ENCODE measurements at regions of chr17 and their contacts with region 1.

Region 1: DNA sequence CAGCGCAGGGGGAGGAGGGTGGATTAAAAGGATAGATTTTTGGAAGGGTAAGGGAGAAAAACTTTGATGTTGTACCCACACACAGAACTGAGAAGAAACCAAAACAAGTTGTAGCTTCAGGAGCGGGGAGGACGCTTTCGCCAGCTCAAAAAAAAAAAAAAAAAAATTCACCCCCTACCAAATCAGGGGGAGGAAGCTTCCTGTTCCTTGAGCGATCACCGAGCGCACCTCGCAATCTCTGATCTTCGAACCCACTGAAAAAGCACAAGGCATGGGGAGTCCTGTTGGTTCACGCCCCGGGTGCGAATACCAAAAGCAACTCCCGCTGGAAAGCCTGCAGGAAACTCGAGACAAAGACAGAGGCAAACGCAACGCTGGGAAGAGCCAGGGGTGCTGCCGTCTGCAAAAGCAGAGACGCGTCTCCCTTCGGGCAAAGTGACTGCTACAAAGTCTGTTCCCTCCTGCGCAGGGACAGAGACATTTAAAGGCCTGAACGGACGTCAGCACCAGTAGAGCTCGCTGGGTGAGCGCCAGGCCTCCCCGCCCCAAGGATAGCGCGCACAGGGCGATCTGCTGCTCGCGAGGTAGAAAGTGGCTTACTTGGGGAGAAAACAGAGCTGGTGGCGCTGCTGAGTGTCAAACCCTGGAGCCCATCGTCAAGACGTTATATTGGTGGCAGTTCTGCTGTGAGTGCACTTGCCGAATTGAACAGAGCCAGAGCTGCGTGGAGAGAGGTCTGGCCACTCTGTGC is 190.4 kb downstream of the USP22 start:
- DNase-seq: peak; percentile 46
- ATAC-seq: peak; percentile 55
- H3K4me3 Mint-ChIP-seq: peak overlapping the region; percentile 60
- H3K27ac Mint-ChIP-seq: no peak overlapping the region
- H3K4me1 Mint-ChIP-seq: peaks cover 12% of the 10 kb centered on the region
- H3K27me3 Mint-ChIP-seq: peaks cover 42% of the 10 kb centered on the region

Region 2: GRCh38 chr17:20800146-20800545 is 52.3 kb before region 1 on chr17:
- CTCF ChIA-PET with region 1: interaction called, 3 read pairs
- POLR2A ChIA-PET with region 1: no interaction called
- intact Hi-C with region 1: loop called in 1 of 2 experiments (anchors 2 kb)
- DNase-seq: no peak
- ATAC-seq: no peak
- H3K4me3 Mint-ChIP-seq: no peak overlapping the region
- H3K27ac Mint-ChIP-seq: no peak overlapping the region
- H3K4me1 Mint-ChIP-seq: peaks cover 10% of the 10 kb centered on the region
- H3K27me3 Mint-ChIP-seq: no peaks in the 10 kb centered on the region

Region 3: DNA sequence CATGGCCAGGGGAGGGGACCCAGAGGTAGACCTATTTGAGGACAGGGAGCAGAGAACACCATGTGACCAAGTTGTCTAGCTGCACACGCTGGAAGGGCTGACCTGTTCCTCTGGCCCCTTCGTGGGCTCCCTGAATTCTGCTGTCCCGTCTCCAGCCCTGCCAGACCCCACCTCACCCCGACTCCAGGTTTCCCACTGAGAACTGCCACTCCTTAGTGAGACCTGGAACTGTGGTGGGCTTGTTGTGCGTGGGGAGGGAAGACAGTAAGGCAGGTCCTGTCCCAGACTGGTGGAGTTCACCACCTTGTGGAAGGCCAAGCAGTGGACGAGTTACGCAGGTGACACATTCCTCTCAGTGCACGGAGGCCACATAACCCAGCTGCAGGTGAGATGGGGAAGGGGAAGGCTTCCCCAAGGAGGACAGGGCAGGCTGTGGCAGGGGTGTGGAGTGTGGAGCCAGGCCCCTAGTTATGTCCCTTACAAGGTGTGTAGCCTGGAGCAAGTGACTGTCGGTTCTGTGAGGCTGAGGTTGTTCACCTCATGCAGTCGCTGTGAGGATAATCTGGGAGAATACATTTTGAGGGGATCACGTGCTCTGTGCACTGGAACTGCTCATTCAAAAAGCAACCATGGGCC is 135.7 kb after region 1 on chr17:
- CTCF ChIA-PET with region 1: no interaction called
- POLR2A ChIA-PET with region 1: no interaction called
- intact Hi-C with region 1: no loop called
- DNase-seq: no peak
- ATAC-seq: no peak
- H3K4me3 Mint-ChIP-seq: no peak overlapping the region
- H3K27ac Mint-ChIP-seq: no peak overlapping the region
- H3K4me1 Mint-ChIP-seq: peaks cover under 1% of the 10 kb centered on the region
- H3K27me3 Mint-ChIP-seq: no peaks in the 10 kb centered on the region

Measured in activated CD4-positive, alpha-beta T cell treated with anti-CD3 and anti-CD28 coated beads for 36 hours (primary cell).